Esophagus muscularis mucosa (tissue), 4 donors: ENCODE measurements at regions of chr16 and their contacts with region 1.

Region 1: GRCh38 chr16:50210266-50211038 is 55.9 kb upstream of the ADCY7 start:
- DNase-seq: no peak
- H3K4me3 ChIP-seq: no peak overlapping the region
- H3K27ac ChIP-seq: peak overlapping the region; percentile 17 to 45 (median 24)
- H3K4me1 ChIP-seq: peaks cover 34 to 59% (median 52%) of the 10 kb centered on the region in 4 donors
- H3K27me3 ChIP-seq: no peaks in the 10 kb centered on the region
- CTCF ChIP-seq: peak; percentile 68 to 83 (median 81)
- EP300 ChIP-seq: no peak
- POLR2A ChIP-seq: no peak

Region 2: GRCh38 chr16:50065624-50066481 is 144.6 kb before region 1 on chr16 and contains the start of gene HEATR3:
- intact Hi-C with region 1: loop called (anchors 2 kb)
- DNase-seq: peak; percentile 96
- H3K4me3 ChIP-seq: peak within 1 kb of the TSS; percentile 87 to 99 (median 96)
- H3K27ac ChIP-seq: peak within 1 kb of the TSS; percentile 95 to 99 (median 98)
- H3K4me1 ChIP-seq: peaks cover 20 to 39% (median 29%) of the 10 kb centered on the region in 4 donors
- H3K27me3 ChIP-seq: no peaks in the 10 kb centered on the region
- CTCF ChIP-seq: no peak
- EP300 ChIP-seq: no peak
- POLR2A ChIP-seq: no peak
- total RNA-seq, gene HEATR3: 10.0 to 25.7 (median 12.4) TPM

Region 3: DNA sequence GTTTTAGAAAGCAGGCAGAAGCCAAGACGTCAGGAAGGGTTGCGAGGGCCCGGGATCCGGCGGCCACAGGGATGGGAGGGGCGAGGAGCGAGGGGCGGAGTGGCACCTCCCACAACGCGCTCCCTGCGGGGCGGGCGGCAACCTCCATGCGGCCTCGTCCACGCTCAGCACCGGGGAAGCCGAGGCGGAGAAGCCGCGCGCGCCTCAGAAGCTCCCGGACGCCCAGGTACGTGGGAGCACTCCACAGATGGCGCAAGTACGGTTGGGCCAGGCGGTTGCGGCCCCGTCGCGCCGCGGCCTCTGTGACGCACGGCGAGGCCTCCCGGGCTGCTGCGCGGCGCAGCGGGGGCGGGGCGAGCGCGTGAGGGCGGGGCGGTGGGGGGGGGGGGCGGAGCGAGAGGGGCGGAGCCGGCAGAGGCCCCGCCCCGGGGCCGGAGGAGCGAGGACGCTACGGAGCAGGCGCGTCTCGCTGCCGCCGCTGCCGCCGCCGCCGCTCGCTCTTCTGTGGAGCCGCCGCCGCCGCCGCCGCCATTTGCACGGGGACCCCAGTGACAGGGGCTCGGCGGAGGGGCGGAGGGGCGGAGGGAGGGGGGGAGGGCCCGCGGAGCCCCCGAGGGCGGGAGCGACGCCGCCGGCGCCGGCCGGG is 57.5 kb before region 1 on chr16 and contains the start of gene TENT4B:
- intact Hi-C with region 1: loop called (anchors 2 kb)
- DNase-seq: peak; percentile 95
- H3K4me3 ChIP-seq: peak within 1 kb of the TSS; percentile 65 to 88 (median 72)
- H3K27ac ChIP-seq: peak within 1 kb of the TSS; percentile 90 to 96 (median 92)
- H3K4me1 ChIP-seq: peaks cover 37 to 45% (median 41%) of the 10 kb centered on the region in 4 donors
- H3K27me3 ChIP-seq: no peaks in the 10 kb centered on the region
- CTCF ChIP-seq: no peak
- EP300 ChIP-seq: no peak
- POLR2A ChIP-seq: peak; percentile 15
- total RNA-seq, gene TENT4B: 9.9 to 18.3 (median 16.7) TPM

Region 4: DNA sequence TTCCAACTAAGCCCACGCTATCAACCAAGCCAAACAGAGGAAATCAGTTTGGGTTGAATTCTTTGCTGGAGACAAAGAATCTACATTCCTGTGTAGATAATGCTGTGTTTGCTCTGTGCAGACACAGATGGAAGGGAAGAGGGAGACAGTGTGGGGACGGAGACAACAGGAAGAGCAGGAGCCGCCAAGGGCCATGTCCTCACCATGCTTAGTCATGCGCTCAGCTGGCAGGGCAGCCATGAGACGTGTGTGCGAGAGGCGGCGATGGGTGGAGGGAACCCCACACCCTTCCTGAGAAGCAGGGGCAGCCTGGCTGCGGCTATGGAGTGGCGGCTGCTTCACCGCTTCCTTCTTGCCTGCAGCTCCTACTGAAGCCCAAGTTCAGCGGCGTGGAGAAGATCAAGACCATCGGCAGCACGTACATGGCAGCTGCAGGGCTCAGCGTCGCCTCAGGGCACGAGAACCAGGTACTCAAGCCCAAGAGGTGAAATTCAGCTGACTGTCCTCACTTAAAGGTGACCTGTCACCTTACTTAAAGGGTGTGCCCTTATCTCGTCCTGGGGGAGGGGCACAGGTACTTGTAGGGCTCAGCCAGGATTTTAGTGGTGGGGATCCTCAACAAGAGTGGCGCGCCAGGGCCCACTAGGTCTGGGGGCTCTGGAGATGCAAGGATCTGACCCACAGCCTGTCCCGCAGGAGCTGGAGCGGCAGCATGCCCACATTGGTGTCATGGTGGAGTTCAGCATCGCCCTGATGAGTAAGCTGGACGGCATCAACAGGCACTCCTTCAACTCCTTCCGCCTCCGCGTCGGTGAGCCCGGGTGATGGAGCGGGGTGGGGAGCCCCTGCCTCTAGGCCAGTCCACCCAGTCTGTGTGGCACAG is 103.4 kb after region 1 on chr16:
- intact Hi-C with region 1: no loop called
- DNase-seq: peak; percentile 92
- H3K4me3 ChIP-seq: no peak overlapping the region
- H3K27ac ChIP-seq: no peak overlapping the region
- H3K4me1 ChIP-seq: peaks cover 3 to 14% (median 10%) of the 10 kb centered on the region in 4 donors
- H3K27me3 ChIP-seq: no peaks in the 10 kb centered on the region
- CTCF ChIP-seq: no peak
- EP300 ChIP-seq: no peak
- POLR2A ChIP-seq: no peak

Region 5: GRCh38 chr16:50354629-50355456 is 144.4 kb after region 1 on chr16:
- intact Hi-C with region 1: loop called (anchors 10 kb)
- DNase-seq: no peak
- H3K4me3 ChIP-seq: no peak overlapping the region
- H3K27ac ChIP-seq: peak overlapping the region in 2 of 4 donors; percentile 24 to 25
- H3K4me1 ChIP-seq: peaks cover 0 to 25% (median 16%) of the 10 kb centered on the region in 4 donors
- H3K27me3 ChIP-seq: no peaks in the 10 kb centered on the region
- CTCF ChIP-seq: peak; percentile 64 to 72 (median 72)
- EP300 ChIP-seq: no peak
- POLR2A ChIP-seq: no peak